PC-9 (cell line): ENCODE measurements at regions of chr3 and their contacts with region 1.

Region 1: GRCh38 chr3:100400780-100401673 is at the starts of genes LNP1 and TOMM70:
- DNase-seq: peak; percentile 97 to 98
- H3K4me3 ChIP-seq: peak within 1 kb of the TSS; percentile 83
- H3K27ac ChIP-seq: peak within 1 kb of the TSS; percentile 78
- H3K4me1 ChIP-seq: peaks cover 36% of the 10 kb centered on the region
- H3K27me3 ChIP-seq: no peaks in the 10 kb centered on the region
- CTCF ChIP-seq: no peak
- total RNA-seq, gene LNP1: 4.8 TPM in 2 replicates
- total RNA-seq, gene TOMM70: 63.7 and 65.2 TPM in 2 replicates

Region 2: GRCh38 chr3:99817437-99818240 is 583.4 kb before region 1 on chr3 and contains the start of gene CMSS1:
- CTCF ChIA-PET with region 1: no interaction called
- POLR2A ChIA-PET with region 1: no interaction called
- intact Hi-C with region 1: loop called (anchors 5 kb)
- DNase-seq: peak; percentile 83 to 96
- H3K4me3 ChIP-seq: peak within 1 kb of the TSS; percentile 69
- H3K27ac ChIP-seq: peak within 1 kb of the TSS; percentile 55
- H3K4me1 ChIP-seq: peaks cover 19% of the 10 kb centered on the region
- H3K27me3 ChIP-seq: no peaks in the 10 kb centered on the region
- CTCF ChIP-seq: peak; percentile 35; the same call in 1 of the 2 replicates
- total RNA-seq, gene CMSS1: 96.8 and 98.9 TPM in 2 replicates

Region 3: GRCh38 chr3:100260685-100261484 is 140.1 kb before region 1 on chr3 and contains the start of gene TBC1D23:
- CTCF ChIA-PET with region 1: no interaction called
- POLR2A ChIA-PET with region 1: interaction called, 23 read pairs
- intact Hi-C with region 1: loop called (anchors 2 kb)
- DNase-seq: peak; percentile 100
- H3K4me3 ChIP-seq: peak within 1 kb of the TSS; percentile 78
- H3K27ac ChIP-seq: peak within 1 kb of the TSS; percentile 89
- H3K4me1 ChIP-seq: peaks cover 51% of the 10 kb centered on the region
- H3K27me3 ChIP-seq: no peaks in the 10 kb centered on the region
- CTCF ChIP-seq: 0 out of 2 replicates have a peak, but pooled peaks have one; percentile 14
- total RNA-seq, gene TBC1D23: 68.0 and 68.7 TPM in 2 replicates

Region 4: DNA sequence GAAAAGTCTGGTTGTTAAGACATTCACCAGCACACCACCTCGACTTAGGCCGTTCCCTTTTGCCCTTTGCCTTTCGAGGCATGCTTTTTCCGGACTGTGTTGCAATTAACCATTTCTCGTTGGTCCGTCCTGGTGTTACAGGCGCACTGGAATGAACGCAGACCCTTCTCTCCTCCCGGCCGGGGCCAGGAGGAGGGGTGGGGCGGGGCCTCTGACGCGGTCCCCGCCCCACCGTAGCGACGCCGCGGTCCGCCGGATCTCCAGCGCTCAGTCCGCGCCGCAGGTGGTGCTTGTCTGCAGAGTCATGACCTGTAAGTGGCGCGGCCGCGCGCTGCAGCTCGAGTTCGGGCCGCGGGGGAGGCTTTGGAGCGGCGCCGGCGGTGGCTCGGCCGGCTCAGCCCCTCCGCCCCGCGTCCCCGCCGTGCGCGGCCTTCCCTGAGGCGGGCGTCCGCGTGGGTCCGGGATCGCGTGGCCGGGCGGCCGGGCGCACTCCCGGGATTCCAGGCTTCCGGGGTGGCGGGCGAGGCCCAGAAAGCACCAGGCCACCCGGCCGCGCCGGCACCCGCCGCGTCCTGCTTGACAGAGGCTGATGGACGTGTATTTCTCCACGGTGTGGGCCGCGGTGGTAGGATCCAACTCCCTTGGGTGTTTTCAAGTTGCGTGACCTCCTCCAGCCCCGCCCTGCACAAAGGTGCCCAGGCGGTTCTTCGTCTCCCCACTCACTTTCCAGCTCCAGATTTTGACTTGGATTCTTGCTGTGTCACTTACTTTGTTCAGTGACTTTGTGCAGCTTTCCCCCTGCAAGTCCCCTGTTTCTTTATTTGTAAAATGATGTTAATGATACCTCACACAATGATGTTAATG is 66.3 kb before region 1 on chr3 and contains the start of gene NIT2:
- CTCF ChIA-PET with region 1: no interaction called
- POLR2A ChIA-PET with region 1: interaction called, 3 read pairs
- intact Hi-C with region 1: loop called (anchors 2 kb)
- DNase-seq: peak; percentile 81 to 87
- H3K4me3 ChIP-seq: peak within 1 kb of the TSS; percentile 68
- H3K27ac ChIP-seq: peak within 1 kb of the TSS; percentile 36
- H3K4me1 ChIP-seq: peaks cover 12% of the 10 kb centered on the region; the same call in 1 of the 2 replicates
- H3K27me3 ChIP-seq: no peaks in the 10 kb centered on the region
- CTCF ChIP-seq: no peak
- total RNA-seq, gene NIT2: 91.0 and 115 TPM in 2 replicates

Region 5: DNA sequence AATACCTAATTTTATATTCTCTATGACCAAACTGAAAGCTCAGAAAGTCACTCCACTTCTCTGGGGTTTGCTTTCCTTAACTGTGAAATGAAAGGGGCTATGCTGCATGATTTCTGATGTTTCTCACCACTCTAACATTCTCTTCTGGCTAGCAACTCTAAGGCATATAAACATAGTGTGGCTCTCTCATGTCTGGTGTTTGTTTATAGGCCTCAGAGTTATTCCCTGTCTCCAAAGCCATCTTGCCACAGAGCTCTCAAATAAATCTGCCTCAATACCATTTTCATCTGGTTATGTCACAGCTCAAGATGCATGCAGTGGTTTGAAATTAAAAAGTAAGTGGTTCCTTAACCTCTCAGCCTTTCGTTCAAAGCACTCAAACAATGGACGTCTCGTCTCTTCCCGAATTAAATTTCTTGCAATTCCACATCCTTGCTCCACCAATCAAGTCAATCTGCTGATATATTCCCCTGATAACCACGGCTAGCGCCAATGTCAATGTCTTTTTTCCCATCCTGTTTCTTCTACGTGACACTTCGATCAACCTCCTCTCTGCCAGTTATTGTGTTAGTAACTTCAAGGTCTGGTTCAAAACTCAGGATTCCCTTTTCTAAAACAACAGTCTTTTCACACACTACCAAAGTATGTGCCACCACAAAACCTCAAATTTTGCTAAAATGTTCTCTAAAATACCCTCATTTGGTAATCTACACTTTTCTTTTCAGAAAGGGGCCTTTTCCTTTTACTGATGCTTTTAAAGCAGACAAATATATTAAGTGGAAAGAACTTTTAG is 16.1 kb before region 1 on chr3:
- CTCF ChIA-PET with region 1: no interaction called
- POLR2A ChIA-PET with region 1: no interaction called
- intact Hi-C with region 1: no loop called
- DNase-seq: no peak
- H3K4me3 ChIP-seq: no peak overlapping the region
- H3K27ac ChIP-seq: no peak overlapping the region
- H3K4me1 ChIP-seq: peaks cover 4% of the 10 kb centered on the region; the same call in 1 of the 2 replicates
- H3K27me3 ChIP-seq: no peaks in the 10 kb centered on the region
- CTCF ChIP-seq: no peak

Region 6: GRCh38 chr3:100425316-100425715 is 24.3 kb after region 1 on chr3:
- CTCF ChIA-PET with region 1: no interaction called
- POLR2A ChIA-PET with region 1: interaction called, 4 read pairs
- intact Hi-C with region 1: loop called (anchors 1 kb)
- DNase-seq: peak; percentile 35 to 77
- H3K4me3 ChIP-seq: 0 out of 2 replicates have a peak overlapping the region, but pooled peaks have one; percentile 1
- H3K27ac ChIP-seq: peak overlapping the region; percentile 42
- H3K4me1 ChIP-seq: peaks cover 22% of the 10 kb centered on the region
- H3K27me3 ChIP-seq: no peaks in the 10 kb centered on the region
- CTCF ChIP-seq: no peak